ENCODE measurements at regions of chr3 and their contacts with region 1.

Region 1: DNA sequence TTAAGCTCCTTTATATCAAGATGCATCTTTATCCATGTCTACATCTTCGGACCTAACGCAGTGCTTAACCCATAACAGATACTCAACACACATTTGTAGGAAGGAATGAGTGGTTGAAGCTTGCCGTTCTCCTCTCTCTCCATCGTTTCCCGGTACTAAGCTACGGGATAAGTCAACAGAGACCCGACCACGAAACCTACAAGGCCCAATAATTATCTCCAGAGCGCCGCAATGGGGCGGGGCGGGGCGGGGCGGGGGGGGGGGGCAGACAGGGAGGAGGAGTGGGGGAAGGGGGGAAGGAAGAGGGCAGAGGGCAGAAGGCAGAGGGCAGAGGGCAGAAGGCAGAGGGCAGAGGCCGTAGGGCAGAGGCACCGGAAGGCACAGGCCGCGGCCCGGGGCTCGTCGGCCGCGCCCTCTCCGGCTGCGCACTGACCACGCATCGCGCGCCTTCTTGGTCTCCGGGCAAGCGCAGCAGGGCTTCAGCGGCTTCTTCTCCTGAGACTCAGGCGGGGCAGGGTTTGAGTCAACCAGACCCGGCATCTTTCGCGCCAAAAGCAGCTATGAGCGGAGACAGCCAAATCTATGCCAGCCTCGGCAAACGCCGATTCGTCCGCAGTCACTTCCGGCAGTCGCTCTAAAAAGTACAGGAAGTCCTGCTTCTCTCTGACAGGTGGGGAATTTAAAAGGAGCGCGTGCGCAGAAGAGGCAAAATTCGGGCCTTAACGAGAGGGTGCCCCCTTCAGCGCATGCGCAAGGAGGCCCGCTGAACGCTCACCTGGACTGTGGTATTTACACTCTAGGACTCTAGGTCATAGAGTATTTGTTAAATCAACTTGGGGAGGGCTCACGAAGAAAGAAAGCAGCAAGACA is at the start of gene COX17:
- DNase-seq: peak; percentile 95
- total RNA-seq, gene COX17: 130 TPM

Region 2: DNA sequence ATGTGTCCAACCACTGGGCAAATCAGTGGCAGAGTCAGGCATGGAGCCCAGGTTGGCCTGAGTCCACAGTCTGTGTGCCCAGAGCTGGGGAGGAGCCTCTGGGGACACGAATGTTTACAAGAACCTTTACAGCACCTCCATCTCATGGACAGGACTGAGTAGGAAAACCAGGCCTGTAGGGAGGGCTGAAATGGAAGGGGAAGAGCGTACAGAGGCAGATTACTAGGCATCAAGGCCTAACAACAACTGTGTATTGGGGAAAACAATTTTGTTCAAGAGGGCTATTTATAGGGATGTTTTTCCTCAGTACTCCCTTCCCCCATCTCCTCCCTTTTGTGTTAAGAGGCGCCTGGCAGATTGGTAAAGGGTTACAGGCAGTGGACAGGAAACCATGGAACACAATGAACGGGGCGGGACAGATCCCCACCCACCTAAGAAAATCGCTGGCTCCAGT is 397.9 kb before region 1 on chr3:
- intact Hi-C with region 1: loop called (anchors 10 kb)
- DNase-seq: peak; percentile 84

Region 3: DNA sequence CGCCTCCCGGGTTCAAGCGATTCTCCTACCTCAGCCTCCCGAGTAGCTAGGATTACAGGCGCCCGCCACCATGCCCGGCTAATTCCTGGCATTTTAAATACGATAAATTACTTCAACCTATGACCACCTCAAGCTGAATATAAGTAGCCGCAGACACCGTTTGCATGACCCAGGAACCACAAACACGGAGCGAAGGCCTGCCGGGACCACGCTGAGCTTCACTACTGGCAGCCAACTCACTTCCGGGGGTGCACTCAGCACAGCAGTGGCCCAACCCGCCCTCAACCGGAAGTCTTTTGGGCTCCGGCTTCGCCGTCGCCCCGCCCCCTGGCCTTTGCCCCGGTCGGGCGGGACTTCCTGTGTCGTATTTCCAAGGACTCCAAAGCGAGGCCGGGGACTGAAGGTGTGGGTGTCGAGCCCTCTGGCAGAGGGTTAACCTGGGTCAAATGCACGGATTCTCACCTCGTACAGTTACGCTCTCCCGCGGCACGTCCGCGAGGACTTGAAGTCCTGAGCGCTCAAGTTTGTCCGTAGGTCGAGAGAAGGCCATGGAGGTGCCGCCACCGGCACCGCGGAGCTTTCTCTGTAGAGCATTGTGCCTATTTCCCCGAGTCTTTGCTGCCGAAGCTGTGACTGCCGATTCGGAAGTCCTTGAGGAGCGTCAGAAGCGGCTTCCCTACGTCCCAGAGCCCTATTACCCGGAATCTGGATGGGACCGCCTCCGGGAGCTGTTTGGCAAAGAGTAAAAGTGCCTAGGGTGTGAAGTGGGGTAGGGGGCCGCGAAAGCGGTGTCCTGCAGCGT is 178.6 kb before region 1 on chr3 and contains the start of gene TIMMDC1:
- intact Hi-C with region 1: loop called (anchors 5 kb)
- DNase-seq: peak; percentile 99
- total RNA-seq, gene TIMMDC1: 211 TPM

Region 4: DNA sequence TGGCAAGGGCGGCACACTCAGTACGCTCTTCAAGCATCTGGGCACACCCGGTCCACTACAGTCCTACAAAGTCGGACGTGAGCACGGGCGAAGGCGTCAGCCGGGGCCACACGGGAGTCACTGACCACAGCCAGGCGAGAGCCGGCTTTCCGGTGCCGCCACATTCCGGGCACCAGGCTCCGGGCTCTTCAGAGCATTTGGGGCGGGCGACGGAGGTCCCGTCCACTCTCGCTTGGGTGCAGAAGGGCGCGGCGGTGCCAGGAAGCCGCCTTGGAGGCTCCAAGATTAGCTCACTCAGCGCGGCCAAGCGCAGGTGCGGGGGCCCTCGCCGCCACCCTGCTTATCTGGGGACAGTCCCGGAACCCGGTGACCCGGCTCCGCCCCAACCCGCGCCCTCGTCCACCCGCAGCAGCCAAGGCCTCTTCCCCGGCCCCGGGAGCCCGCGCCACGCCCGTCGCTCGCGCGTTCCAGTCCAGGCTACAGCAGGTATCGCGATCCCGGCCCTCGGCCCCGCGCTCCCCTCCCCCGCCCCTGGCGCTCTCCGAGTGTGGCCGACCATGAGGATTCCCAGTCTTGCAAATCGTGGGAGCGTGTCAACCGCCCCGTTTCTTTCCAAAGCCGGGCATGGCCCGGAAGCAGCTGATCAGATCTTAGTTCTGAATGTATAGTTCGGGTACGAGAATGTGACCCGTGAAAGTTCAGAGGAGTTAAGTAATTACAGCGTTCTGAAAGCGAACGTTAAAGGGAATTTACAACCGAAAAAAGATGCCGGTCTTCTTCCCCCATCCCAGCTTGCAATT is 97.4 kb before region 1 on chr3 and contains the start of gene ADPRH:
- intact Hi-C with region 1: loop called (anchors 2 kb)
- DNase-seq: peak; percentile 92
- total RNA-seq, gene ADPRH: 10.9 TPM

Region 5: GRCh38 chr3:119637679-119638525 is 39.1 kb before region 1 on chr3:
- intact Hi-C with region 1: loop called (anchors 2 kb)
- DNase-seq: no peak

Measured in cardiac septum (tissue), 1 donor.